Astrocyte of the spinal cord (primary cell): ENCODE measurements at regions of chr12 and their contacts with region 1.

Region 1: GRCh38 chr12:53675651-53676453 is at the start of gene ATP5MC2:
- DNase-seq: peak; percentile 99
- H3K4me3 ChIP-seq: peak within 1 kb of the TSS; percentile 67
- CTCF ChIP-seq: peak; percentile 99

Region 2: GRCh38 chr12:53476769-53477209 is 199.1 kb before region 1 on chr12:
- in situ Hi-C with region 1: no loop called
- DNase-seq: no peak
- H3K4me3 ChIP-seq: no peak overlapping the region
- CTCF ChIP-seq: peak; percentile 40

Region 3: DNA sequence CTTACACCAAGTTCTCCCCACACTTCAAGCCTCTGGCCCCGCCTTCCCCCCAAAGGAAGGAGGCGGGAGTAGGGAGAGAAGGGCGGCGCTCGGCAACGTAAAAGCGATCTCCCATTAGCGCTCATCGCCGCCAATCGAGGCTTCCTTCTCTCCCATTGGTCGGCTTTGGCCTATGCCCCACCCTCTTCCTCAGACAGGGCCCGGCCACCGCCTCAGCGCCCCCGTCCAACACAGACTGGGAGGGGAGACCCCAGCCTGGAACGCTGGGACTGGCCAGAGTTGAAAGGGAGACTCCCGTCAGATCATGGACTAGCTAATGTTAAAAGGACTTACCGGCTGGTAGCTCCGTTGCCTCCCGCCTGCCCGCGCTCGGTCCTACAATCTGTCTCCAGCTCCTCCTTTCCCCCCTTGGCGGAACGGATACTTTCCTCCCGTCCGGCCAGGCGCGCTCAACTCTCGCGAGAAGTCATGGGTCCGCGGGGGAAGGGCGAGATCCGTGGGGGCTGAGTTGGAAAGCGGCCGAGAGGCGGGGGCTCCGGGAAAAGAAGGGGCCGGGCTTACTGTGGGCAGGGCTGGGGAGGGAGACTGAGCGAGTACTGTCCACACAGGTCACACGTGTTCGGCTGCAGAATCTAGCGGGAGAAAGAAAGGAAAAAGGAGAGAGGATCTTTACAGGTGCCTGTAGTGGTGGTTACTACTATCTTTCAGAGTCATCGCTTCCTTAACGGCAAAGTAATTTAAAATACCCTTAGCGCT is 49.7 kb before region 1 on chr12 and contains the start of gene ATF7:
- in situ Hi-C with region 1: loop called (anchors 10 kb)
- DNase-seq: peak; percentile 99
- H3K4me3 ChIP-seq: peak within 1 kb of the TSS; percentile 90
- CTCF ChIP-seq: no peak